Activated B cell treated with CpG ODN at 0.5 μM for 24 hours (primary cell): ENCODE measurements at regions of chr17 and their contacts with region 1.

Region 1: DNA sequence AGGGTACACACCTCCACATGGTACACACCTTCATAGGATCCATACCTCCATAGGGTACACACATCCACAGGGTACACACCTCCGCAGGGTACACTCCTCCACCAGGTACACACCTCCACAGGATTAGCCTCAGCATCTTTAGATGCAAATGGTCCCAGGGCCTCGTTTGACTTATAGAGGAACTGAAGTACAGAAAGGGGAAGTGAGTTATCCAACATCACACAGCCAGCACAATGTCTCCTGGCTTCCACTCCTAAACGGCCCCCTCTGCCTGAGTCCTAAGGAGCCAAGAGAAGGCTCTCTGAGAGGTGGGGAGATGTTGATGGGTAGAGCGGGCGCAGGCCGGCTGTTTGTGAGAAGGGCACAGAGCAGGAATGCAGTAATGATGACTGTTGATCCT is 12.0 kb downstream of the FOXN1 start:
- DNase-seq: no peak
- ATAC-seq: peak; percentile 84
- H3K4me3 Mint-ChIP-seq: no peak overlapping the region
- H3K27ac Mint-ChIP-seq: peak overlapping the region; percentile 0
- H3K4me1 Mint-ChIP-seq: peaks cover 9% of the 10 kb centered on the region
- H3K27me3 Mint-ChIP-seq: no peaks in the 10 kb centered on the region
- CTCF ChIP-seq: no peak

Region 2: DNA sequence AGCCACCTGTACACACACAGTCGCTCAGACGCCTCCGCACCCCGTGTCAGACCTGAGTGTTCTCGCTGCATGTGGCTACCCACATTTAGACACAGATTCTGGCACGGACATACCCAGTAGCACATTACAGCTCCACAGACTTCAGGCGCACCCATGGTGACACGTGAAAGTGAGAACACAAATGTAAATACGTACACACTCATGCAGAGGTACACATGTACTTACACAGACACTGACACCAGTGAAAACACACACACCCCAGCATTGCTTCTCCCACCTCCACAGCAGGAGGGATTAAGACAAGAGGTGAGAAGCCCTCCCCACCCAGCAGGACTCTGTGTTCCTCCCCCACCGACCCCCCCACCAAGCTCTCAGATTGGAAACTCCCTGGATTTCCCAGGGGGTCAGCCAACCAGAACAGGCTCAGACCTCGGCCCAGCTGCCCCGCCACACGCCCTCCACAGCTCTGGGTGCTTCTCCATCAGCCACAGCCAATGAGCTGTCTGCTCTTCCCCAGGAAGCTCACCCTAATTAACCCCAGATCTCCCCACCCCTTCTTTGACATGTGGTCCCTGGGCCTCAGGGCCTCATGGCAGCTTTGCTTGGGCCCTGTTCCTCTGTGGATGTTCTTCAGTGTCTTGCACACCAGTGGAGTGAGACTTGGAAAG is 17.3 kb before region 1 on chr17:
- CTCF ChIA-PET with region 1: no interaction called
- POLR2A ChIA-PET with region 1: no interaction called
- intact Hi-C with region 1: loop called (anchors 2 kb)
- DNase-seq: peak; percentile 34
- ATAC-seq: peak; percentile 83
- H3K4me3 Mint-ChIP-seq: peak overlapping the region; percentile 17
- H3K27ac Mint-ChIP-seq: peak overlapping the region; percentile 71
- H3K4me1 Mint-ChIP-seq: peaks cover 24% of the 10 kb centered on the region
- H3K27me3 Mint-ChIP-seq: peaks cover 6% of the 10 kb centered on the region
- CTCF ChIP-seq: no peak